PC-3 (cell line): ENCODE measurements at regions of chr5 and their contacts with region 1.

Region 1: DNA sequence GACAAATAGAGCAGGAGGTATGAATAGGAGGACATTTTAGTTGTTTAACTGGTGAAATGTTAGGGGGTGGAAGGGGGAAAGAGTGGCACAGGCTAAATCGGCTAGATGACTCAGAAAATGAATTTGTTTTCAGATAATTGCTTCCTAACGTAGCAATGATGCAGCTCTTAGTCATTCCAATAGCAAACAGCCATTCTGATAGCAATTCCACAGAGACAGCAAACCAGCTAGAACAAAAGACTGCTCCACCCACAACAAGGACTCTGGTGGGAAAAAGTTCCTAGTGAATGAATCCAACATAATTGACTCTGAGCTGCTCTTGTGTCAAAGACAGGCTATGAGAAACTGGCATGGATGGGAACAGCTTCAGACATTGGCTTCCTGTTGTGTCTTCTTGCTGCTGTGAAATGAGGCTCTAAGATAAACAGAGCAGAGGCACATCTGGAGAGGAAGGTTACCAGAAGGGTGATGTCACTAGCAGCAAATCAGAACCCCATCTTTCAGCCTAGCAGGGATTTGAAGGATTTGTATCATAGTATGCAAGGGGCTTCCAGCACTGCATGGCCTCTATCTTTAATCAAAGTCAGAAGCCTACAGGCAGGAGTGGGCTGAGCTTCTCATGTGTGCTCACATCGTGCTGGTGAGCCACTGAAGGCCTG is 28.1 kb upstream of the F2RL1 start:
- DNase-seq: peak; percentile 93
- ATAC-seq: peak; percentile 73
- H3K4me3 ChIP-seq: peak overlapping the region; percentile 45
- H3K27ac ChIP-seq: peak overlapping the region; percentile 100
- H3K4me1 ChIP-seq: peaks cover 49% of the 10 kb centered on the region
- H3K27me3 ChIP-seq: no peaks in the 10 kb centered on the region
- CTCF ChIP-seq: no peak

Region 2: GRCh38 chr5:76622973-76623596 is 167.7 kb before region 1 on chr5 and contains the start of gene F2RL2:
- CTCF ChIA-PET with region 1: no interaction called
- POLR2A ChIA-PET with region 1: no interaction called
- intact Hi-C with region 1: no loop called
- DNase-seq: peak; percentile 43
- ATAC-seq: peak; percentile 84
- H3K4me3 ChIP-seq: no peak within 1 kb of the TSS
- H3K27ac ChIP-seq: no peak within 1 kb of the TSS
- H3K4me1 ChIP-seq: no peaks in the 10 kb centered on the region
- H3K27me3 ChIP-seq: no peaks in the 10 kb centered on the region
- CTCF ChIP-seq: no peak
- total RNA-seq, gene F2RL2: 0.11 TPM in 1 of 2 replicates, not detected in the other

Region 3: DNA sequence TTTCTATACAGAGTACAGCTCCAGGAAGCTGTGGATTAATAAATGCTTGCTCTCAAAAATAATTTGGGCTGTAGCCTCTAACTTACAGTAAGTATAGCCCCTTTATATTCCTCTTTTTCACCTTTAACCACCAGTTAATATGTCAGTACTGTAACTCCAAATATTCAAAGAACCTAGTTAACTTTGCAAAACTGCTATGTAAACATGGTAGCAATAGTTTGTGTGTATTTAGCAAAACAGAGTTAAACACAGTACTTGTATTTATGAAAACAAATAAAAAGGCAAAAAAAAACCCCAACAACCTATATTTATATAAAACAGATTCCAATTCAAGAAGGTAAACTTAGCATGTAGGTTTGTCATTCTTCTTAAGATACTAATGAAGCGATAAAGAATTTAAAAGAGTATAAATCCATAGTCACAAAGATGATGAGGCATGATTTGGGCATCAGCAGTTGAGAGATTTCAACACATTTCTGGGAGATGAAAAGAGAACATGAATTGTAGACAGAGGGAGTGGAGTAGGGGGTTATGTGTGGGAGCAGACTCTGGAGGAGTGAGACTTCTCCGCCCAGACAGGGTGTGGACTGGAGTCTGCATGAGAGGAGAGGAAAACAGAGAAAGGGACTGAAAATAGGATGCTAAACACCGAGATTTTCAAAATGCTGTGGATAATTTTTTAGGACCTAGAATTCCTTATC is 18.9 kb before region 1 on chr5:
- CTCF ChIA-PET with region 1: no interaction called
- POLR2A ChIA-PET with region 1: no interaction called
- intact Hi-C with region 1: no loop called
- DNase-seq: no peak
- ATAC-seq: peak; percentile 27; the same call in 1 of the 2 replicates
- H3K4me3 ChIP-seq: no peak overlapping the region
- H3K27ac ChIP-seq: no peak overlapping the region
- H3K4me1 ChIP-seq: 0 out of 2 replicates have a peak, but pooled peaks cover 5% of the 10 kb centered on the region
- H3K27me3 ChIP-seq: no peaks in the 10 kb centered on the region
- CTCF ChIP-seq: no peak

Region 4: DNA sequence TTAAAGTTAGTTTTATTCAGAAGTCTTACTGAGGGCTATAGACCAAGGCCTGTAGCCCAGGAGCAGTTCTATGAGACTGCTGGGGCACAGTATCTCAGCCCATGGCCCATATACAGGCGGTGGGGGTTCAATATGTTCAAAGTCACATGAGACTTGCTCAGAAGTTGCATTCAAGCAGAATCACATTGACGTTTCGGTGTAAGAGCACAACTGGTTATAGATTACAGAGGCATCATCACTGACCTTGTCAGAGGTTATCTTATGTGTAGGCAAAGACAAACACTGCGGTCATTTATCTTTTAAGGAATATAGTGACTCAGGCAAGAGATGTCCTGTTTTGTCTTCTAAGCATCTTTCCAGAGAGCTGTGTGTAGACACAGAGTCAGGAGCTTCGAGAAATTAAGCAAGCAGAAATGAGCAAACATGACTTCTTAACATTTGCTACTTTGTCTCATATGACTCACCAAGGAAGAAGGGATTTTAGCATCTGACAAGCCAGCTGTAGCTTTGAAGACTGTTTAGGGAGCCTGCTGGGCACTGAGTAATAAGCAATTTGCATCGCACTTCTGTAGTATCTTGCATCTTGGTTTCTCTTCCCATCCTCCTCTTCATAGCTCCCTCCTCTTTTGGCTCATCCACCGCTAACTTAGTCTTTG is 15.2 kb after region 1 on chr5:
- CTCF ChIA-PET with region 1: interaction called, 3 read pairs
- POLR2A ChIA-PET with region 1: interaction called, 5 read pairs
- intact Hi-C with region 1: loop called (anchors 2 kb)
- DNase-seq: peak; percentile 90
- ATAC-seq: peak; percentile 75
- H3K4me3 ChIP-seq: no peak overlapping the region
- H3K27ac ChIP-seq: peak overlapping the region; percentile 100
- H3K4me1 ChIP-seq: peaks cover 59% of the 10 kb centered on the region
- H3K27me3 ChIP-seq: no peaks in the 10 kb centered on the region
- CTCF ChIP-seq: no peak

Region 5: GRCh38 chr5:76818844-76819831 is 28.4 kb after region 1 on chr5 and contains the start of gene F2RL1:
- CTCF ChIA-PET with region 1: interaction called, 3 read pairs
- POLR2A ChIA-PET with region 1: interaction called, 22 read pairs
- intact Hi-C with region 1: loop called (anchors 1 kb)
- DNase-seq: peak; percentile 93
- ATAC-seq: peak; percentile 65
- H3K4me3 ChIP-seq: peak within 1 kb of the TSS; percentile 79
- H3K27ac ChIP-seq: peak within 1 kb of the TSS; percentile 97
- H3K4me1 ChIP-seq: peaks cover 64% of the 10 kb centered on the region
- H3K27me3 ChIP-seq: no peaks in the 10 kb centered on the region
- CTCF ChIP-seq: no peak
- total RNA-seq, gene F2RL1: 163 and 167 TPM in 2 replicates

Region 6: DNA sequence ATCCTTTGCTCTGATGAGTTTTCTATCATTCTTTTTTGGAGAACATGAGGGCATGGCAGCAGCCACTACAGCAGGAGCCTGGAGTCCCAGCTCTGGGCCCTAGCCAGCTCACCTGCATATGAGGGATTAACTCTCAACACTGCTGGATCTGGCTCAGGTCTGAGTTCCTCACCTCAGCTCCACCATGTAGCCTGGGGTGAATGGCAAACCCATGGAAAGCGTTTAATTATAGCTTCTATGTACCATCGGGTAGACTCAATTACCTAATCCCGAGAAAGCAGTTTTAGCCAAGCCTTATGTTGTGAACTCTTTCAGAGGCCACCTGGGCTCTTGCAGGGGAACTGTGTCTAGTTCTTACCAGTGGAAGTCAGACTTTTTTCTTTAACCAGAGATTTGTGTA is 55.1 kb after region 1 on chr5:
- CTCF ChIA-PET with region 1: interaction called, 11 read pairs
- POLR2A ChIA-PET with region 1: no interaction called
- intact Hi-C with region 1: no loop called
- DNase-seq: no peak
- ATAC-seq: no peak
- H3K4me3 ChIP-seq: no peak overlapping the region
- H3K27ac ChIP-seq: no peak overlapping the region
- H3K4me1 ChIP-seq: no peaks in the 10 kb centered on the region
- H3K27me3 ChIP-seq: no peaks in the 10 kb centered on the region
- CTCF ChIP-seq: no peak

Region 7: DNA sequence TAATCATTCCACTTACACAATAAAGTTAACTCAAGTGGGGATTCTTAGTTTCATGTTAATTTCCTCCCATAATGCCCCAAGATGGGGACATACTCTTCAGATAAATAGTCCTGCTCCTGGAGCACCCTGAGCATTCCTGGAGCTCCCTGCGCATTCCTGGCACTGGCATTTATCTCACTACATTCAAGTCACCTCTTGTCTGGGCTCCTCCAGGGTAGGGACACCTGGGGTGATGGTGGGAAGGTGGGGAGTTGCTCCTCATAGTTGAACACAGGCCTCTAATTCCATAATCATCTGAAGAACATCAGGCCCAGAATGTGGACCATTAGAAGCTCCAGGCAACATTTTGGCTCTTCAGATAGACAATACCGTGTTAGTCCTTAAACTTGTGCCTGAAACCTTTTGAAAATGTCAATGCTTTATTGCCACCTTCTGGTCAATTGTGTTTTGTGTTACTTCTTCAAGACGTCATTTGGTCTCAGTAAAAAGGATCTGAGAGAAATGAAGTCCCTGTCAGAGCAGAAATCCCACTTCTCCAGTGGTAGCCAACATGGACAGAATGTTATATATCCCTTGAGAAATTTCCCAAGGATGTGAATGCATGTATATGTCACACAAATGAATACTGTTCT is 225.3 kb after region 1 on chr5:
- CTCF ChIA-PET with region 1: no interaction called
- POLR2A ChIA-PET with region 1: no interaction called
- intact Hi-C with region 1: loop called (anchors 10 kb)
- DNase-seq: peak; percentile 62
- ATAC-seq: peak; percentile 52
- H3K4me3 ChIP-seq: no peak overlapping the region
- H3K27ac ChIP-seq: no peak overlapping the region
- H3K4me1 ChIP-seq: peaks cover 4% of the 10 kb centered on the region; the same call in 1 of the 2 replicates
- H3K27me3 ChIP-seq: no peaks in the 10 kb centered on the region
- CTCF ChIP-seq: peak; percentile 64

Region 8: DNA sequence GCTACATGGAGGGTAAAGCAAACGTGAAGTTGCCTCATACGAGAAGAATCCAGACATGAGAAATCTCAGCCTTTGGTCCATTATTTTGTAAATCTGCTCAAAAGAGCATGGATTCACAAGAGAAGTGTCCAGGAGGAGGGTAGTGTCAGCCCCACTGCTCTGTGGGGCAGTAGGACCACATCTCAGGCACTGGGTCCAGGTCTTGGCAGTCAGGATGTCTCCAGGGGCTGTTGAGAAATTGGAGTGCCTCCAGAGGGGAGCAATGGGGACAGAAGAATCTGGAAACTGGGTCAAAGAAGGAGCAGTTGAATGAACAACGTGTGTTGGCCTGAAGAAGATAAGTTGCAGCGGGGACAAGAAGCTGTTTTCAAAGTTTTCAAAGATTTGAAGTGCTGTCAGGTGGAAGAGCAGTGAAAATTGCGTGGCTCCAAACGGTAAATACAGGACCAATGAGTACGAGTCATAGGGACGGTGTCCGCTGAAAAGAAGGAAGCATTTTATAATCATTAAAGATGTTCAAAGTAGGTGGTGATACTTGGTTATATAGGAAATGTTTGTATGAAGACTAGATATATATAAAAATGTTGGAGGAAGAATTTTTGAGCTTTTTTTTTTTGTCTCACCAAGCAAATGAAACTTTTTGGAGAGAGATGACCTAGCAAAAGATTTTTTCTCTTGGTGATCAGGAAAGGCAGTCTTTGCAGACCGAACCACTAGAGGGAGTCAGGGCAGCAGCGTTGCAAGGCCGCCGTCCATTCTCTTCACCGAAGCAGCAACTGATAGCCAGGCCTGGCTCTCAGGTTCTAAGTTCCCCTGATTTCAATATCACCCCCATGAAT is 353.5 kb after region 1 on chr5:
- CTCF ChIA-PET with region 1: no interaction called
- POLR2A ChIA-PET with region 1: no interaction called
- intact Hi-C with region 1: no loop called
- DNase-seq: peak; percentile 65
- ATAC-seq: peak; percentile 57
- H3K4me3 ChIP-seq: no peak overlapping the region
- H3K27ac ChIP-seq: no peak overlapping the region
- H3K4me1 ChIP-seq: peaks cover 9% of the 10 kb centered on the region
- H3K27me3 ChIP-seq: no peaks in the 10 kb centered on the region
- CTCF ChIP-seq: peak; percentile 78